GM10248 (cell line): ENCODE measurements at regions of chr19 and their contacts with region 1.

Region 1: GRCh38 chr19:1863726-1864480 is 524 bp upstream of the KLF16 start:
- DNase-seq: peak; percentile 94
- CTCF ChIP-seq: no peak

Region 2: DNA sequence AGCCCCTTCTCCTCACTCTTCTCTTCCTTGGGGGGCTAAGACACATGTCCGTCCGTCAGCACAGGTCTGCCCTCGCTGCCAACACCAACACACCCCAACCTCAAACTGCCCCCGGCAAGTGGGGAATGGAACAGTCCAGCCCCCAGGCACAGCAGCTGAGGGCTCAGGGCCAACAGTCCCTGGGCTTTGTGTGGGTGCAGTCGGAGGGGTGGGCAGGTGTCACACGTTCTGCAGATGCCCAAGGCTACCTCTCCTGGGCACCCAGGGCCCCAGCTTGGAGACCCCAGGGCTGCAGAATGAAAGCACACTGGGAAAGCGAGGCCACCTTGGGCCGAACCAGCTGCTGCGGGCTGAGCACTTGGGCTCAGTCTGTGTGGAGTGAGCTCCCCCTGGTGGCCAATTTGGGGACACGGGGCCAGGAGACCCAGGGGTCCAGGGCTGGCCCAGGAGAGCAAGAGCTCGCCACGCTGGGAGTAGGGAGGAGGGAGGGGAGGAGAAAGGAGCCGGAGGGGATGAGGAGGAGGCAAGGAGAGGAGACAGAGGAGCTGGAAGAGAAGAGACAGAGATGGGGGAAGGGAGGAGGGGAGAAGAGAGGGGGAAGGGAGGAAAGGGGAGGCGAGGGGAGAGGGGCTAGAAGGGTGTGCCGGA is 37.9 kb before region 1 on chr19:
- CTCF ChIA-PET with region 1: no interaction called
- POLR2A ChIA-PET with region 1: no interaction called
- DNase-seq: peak; percentile 90
- CTCF ChIP-seq: peak; percentile 96

Region 3: DNA sequence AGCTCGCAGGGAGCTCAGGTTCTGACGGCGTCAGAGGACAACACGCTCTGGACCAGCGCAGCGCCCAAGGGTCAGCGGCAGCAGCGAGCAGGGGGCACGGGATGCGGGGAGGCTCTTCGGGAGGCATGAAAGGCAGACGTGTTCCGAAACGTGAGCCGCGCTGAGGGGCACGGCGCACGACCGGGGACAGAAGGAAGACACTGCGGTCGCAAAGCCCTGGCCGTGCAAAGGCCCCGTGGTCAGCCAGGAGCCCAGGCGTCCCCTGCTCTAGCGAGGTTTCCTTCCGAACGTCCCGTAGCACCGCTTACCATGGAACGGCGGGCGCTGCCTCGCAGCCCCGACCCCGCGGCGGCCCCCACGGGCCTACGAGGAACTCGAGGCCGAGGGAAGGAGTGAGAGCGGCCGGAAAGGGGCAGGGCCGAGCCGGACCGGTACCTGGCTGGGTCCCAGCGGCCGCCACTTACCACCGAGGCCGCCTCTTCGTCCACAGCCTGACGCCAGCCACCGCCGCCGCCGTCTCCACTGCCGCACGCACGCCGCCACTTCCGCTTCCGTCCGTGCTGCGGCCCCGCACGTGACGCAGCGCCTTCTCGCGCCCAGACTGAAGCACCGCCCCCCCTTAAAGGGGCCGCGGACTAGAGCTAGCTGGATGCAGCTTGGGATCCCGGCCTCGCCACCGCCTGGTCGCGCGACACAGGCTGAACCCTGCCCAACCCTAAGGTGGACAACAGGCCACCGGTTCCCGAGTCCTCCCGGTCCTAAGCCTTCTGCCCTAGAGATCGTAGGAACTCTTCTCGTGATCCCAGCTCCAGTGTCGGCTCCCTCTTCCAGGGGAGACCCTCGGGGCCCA is 12.0 kb after region 1 on chr19:
- CTCF ChIA-PET with region 1: interaction called, 23 read pairs
- POLR2A ChIA-PET with region 1: interaction called, 7 read pairs
- DNase-seq: peak; percentile 91
- CTCF ChIP-seq: no peak

Region 4: GRCh38 chr19:2061495-2062381 is 197.8 kb after region 1 on chr19:
- CTCF ChIA-PET with region 1: no interaction called
- POLR2A ChIA-PET with region 1: no interaction called
- DNase-seq: peak; percentile 99
- CTCF ChIP-seq: peak; percentile 9